Common myeloid progenitor, CD34-positive (primary cell): ENCODE measurements at regions of chr3 and their contacts with region 1.

Region 1: DNA sequence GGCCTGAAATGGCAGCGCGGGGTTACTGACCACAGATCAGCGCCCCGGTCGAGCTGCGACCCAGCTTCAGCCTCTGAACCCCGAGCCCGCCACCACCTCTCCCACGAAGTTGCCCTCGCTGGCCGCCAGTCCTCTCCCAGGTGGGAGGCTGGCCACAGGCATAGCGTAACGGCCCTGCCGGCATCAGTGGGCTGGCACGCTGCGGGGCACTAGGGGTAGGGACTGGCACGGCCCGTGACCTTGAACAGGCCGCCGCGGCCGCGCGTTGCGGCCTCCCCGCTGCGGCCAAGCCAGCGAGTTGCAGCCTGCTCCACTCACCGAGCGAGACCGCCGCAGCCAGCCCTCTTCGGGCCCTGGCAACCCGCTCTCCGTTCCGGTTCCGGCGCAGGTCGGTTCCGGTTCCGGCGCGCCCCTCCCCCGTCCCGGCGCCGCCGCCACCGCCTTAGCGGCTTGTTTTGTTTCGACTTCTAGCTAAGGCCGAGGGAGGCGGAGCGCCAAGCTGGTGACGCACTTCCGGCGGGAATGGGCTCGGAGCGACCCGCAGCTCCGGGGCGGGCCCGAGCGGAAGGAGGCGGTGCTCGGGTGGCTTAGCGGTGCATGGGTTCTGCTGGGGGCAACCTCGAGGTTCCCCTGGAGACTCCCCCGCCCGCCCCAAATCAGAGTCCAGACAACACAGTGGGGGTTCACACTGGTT is at the start of gene USP19:
- DNase-seq: peak; percentile 97
- H3K4me3 ChIP-seq: peak within 1 kb of the TSS; percentile 54 to 90 (median 88)
- H3K27ac ChIP-seq: peak within 1 kb of the TSS; percentile 76 to 94
- H3K4me1 ChIP-seq: peaks cover 2 to 26% (median 21%) of the 10 kb centered on the region in 4 experiments
- H3K27me3 ChIP-seq: no peaks in the 10 kb centered on the region

Region 2: DNA sequence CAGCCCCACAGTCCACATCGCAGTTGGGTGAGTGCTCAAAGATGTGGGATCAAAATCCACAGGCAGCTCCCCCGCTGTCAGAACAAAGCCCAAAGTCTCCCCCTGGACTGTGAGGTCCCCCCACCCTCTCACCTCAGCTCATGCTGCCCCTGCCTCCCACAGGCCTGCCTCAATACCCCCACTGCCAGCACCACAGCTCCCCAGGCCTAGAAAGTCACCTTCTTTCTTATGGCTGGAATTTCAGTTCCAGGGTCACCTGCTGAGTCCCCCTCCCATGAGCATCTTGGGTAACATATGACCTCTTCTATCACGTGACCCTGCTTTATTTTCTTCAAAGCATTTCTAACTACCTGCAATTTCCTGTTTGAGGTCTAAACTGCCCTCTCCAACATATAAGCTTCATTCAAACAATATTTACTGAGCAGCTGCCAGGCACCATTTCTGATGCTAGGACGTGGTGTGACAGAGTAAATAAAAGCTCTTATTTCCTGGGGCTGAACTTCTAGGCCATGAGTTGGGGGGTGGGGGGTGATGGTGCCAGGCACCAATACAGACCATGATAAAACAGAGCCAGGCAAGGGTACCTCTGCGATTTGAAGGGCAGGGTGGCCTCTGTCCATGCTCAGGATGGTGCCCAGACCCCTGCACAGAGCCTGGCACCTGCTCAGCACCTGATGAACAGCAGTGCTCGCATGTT is 496.6 kb before region 1 on chr3:
- CTCF ChIA-PET with region 1: no interaction called
- POLR2A ChIA-PET with region 1: no interaction called
- DNase-seq: no peak
- H3K4me3 ChIP-seq: no peak overlapping the region
- H3K27ac ChIP-seq: no peak overlapping the region
- H3K4me1 ChIP-seq: peaks cover 0 to 3% (median 0%) of the 10 kb centered on the region in 4 experiments
- H3K27me3 ChIP-seq: no peaks in the 10 kb centered on the region

Region 3: DNA sequence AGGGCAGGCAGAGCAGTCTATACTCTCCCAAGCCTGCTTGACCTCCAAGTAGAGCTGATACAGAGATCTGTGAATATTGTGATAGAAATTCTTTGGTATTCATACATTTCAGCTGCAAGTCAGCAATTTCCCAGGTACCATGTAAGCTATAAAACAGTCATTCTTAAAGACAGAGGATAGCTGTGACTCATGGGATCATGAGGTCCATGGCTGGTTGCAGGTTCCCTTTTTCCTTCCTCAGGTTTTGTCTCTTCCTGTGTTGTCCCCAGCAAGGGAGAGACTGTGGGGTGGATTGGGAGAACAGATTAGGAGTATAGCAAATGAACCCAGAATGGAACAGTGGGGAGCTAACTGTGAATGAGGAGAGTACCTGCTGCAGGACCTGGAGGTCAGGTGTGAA is 135.9 kb before region 1 on chr3:
- CTCF ChIA-PET with region 1: no interaction called
- POLR2A ChIA-PET with region 1: no interaction called
- DNase-seq: no peak
- H3K4me3 ChIP-seq: no peak overlapping the region
- H3K27ac ChIP-seq: peak overlapping the region in 1 of 2 experiments; percentile 34
- H3K4me1 ChIP-seq: peaks cover 0 to 21% (median 9%) of the 10 kb centered on the region in 4 experiments
- H3K27me3 ChIP-seq: no peaks in the 10 kb centered on the region

Region 4: DNA sequence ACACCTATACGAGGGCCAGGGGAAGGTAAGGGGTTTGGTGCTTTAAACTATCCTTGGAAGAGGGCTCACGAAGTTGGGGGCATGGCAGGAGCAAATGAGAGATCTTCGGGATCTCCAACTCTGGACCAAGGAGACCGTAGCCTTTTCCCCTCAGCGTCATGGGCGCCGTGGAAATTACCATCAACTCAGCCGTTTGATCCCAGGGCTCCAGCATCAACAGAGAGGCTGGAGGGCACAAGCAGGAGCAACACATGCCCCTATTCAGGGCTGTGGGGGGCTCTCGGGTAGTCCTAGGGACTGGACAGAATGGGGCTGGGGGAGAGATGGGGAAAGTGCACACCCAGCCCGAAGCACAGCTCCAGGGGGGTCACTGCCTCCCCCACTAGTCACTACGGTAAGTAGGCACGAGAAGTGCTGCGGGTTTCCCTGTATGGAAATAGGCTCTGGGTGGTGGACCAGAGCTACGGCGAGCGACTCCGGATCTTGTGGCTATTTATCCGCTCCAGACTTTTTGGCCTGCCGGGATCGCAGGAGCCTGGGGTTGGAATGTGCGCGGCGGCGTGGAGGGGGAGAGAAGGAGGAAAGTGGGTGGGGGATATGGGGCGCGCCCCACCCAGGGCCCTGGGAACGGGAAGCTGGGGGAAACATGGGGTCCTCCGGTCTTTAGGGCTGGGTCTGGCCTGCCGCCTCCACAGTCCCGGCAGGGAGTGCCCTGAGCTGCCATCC is 12.8 kb after region 1 on chr3:
- CTCF ChIA-PET with region 1: interaction called, 35 read pairs
- POLR2A ChIA-PET with region 1: interaction called, 5 read pairs
- DNase-seq: peak; percentile 50 to 70 (median 65)
- H3K4me3 ChIP-seq: peak overlapping the region; percentile 19 to 77 (median 53)
- H3K27ac ChIP-seq: peak overlapping the region; percentile 33 to 77
- H3K4me1 ChIP-seq: peaks cover 5 to 25% (median 18%) of the 10 kb centered on the region in 4 experiments
- H3K27me3 ChIP-seq: peaks cover 0 to 1% (median 0%) of the 10 kb centered on the region in 5 experiments

Region 5: GRCh38 chr3:50057756-50058155 is 937.2 kb after region 1 on chr3:
- CTCF ChIA-PET with region 1: no interaction called
- POLR2A ChIA-PET with region 1: no interaction called
- DNase-seq: no peak
- H3K4me3 ChIP-seq: no peak overlapping the region
- H3K27ac ChIP-seq: no peak overlapping the region
- H3K4me1 ChIP-seq: no peaks in the 10 kb centered on the region
- H3K27me3 ChIP-seq: no peaks in the 10 kb centered on the region